ENCODE measurements at regions of chr2 and their contacts with region 1.

Region 1: GRCh38 chr2:152421521-152422370 is 86.8 kb downstream of the FMNL2 start:
- DNase-seq: peak; percentile 90 to 98 (median 97)
- H3K4me3 ChIP-seq: peak overlapping the region in 2 of 3 experiments; percentile 16 to 57
- H3K4me3 Mint-ChIP-seq: peak overlapping the region; percentile 37 to 84
- H3K27ac ChIP-seq: peak overlapping the region; percentile 64 to 94
- H3K27ac Mint-ChIP-seq: peak overlapping the region; percentile 96 to 99 (median 97)
- H3K4me1 ChIP-seq: peaks cover 51 to 56% of the 10 kb centered on the region in 2 donors
- H3K4me1 Mint-ChIP-seq: peaks cover 53% of the 10 kb centered on the region
- H3K27me3 ChIP-seq: no peaks in the 10 kb centered on the region
- H3K27me3 Mint-ChIP-seq: no peaks in the 10 kb centered on the region
- CTCF ChIP-seq: no peak

Region 2: DNA sequence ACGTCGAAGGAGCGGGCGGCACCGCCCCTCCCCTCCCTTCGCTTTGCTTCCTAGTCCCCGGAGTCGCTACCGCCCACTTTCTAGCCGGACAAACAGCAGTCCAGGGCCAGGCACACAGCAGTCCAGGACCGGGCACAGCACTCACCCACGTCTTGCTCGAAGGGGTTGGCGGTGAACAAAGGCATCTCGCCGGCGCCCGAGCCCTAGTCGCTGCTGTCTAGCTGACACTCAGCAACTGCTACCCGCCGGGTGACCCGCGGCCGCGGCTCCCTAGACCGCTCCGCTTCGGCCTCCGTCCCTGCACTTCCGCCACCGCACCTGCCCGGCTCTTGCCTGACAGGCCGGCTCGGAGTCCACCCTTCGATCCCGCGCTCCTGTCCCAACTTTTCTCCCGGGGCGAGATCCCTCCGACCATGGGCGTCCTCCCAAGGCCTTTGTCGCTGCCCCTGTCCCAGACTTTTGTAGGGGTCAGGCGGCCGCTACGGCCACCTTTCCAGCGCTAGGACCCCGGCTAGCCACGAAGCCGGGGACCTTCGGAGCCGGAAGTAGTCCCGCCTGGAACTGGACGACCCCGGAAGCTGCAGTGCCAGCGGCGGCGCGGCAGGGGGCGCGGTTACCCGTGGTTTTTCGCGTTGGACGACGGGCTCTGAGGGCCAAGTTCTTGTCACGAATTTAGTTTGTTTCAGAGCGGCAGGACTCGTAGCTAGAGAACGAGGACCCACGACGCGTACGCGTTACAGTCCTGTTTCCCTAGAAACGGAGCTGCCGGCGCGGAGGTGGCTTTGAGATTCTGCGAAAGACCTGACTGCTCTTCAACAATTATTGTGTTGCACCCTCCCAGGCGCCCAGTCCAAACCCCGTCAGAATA is 246.1 kb before region 1 on chr2 and contains the start of gene STAM2:
- intact Hi-C with region 1: loop called in 1 of 2 experiments (anchors 5 kb)
- DNase-seq: peak; percentile 89 to 92 (median 90)
- H3K4me3 ChIP-seq: peak within 1 kb of the TSS; percentile 70 to 95 (median 88)
- H3K4me3 Mint-ChIP-seq: peak within 1 kb of the TSS; percentile 93 to 96
- H3K27ac ChIP-seq: peak within 1 kb of the TSS; percentile 92 to 99
- H3K27ac Mint-ChIP-seq: peak within 1 kb of the TSS; percentile 99 to 100 (median 100)
- H3K4me1 ChIP-seq: peaks cover 29 to 33% of the 10 kb centered on the region in 2 donors
- H3K4me1 Mint-ChIP-seq: peaks cover 37% of the 10 kb centered on the region
- H3K27me3 ChIP-seq: no peaks in the 10 kb centered on the region
- H3K27me3 Mint-ChIP-seq: peaks cover 0 to 3% (median 2%) of the 10 kb centered on the region in 3 donors
- CTCF ChIP-seq: peak; percentile 95
- polyA plus RNA-seq, gene STAM2: 6.9 to 12.6 (median 8.2) TPM

Region 3: DNA sequence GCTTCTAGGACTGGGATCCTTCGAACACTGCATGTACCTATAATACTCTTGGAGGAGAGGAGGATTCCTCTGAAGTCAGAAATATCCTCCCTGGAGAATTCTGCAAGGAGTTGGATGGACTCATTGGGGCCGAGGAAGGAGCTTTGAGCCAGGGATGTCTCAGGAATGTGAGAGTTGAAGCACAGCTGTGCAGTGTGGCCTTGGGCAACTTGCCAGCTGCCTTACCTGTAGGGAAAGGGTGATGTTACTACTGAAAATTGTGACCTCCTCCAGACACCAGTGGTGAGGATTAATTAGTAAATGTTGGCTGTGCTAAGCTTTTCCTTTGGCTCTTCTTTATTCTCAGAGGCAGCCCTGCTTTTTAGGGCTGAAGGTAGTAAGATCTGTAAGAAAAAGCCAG is 45.4 kb before region 1 on chr2:
- intact Hi-C with region 1: no loop called
- DNase-seq: no peak
- H3K4me3 ChIP-seq: no peak overlapping the region
- H3K4me3 Mint-ChIP-seq: peak overlapping the region in 1 of 2 donors; percentile 37
- H3K27ac ChIP-seq: no peak overlapping the region
- H3K27ac Mint-ChIP-seq: no peak overlapping the region
- H3K4me1 ChIP-seq: no peaks in the 10 kb centered on the region
- H3K4me1 Mint-ChIP-seq: no peaks in the 10 kb centered on the region
- H3K27me3 ChIP-seq: no peaks in the 10 kb centered on the region
- H3K27me3 Mint-ChIP-seq: no peaks in the 10 kb centered on the region
- CTCF ChIP-seq: no peak

Measured in CD14-positive monocyte (primary cell).